MCF 10A (cell line): ENCODE measurements at regions of chr4 and their contacts with region 1.

Region 1: GRCh38 chr4:83043801-83044407 is 8.9 kb downstream of the COPS4 start:
- DNase-seq: peak; percentile 56
- H3K4me3 Mint-ChIP-seq: no peak overlapping the region
- H3K27ac Mint-ChIP-seq: peak overlapping the region; percentile 31
- H3K4me1 Mint-ChIP-seq: peaks cover 5% of the 10 kb centered on the region
- H3K27me3 Mint-ChIP-seq: no peaks in the 10 kb centered on the region
- CTCF ChIP-seq: no peak

Region 2: DNA sequence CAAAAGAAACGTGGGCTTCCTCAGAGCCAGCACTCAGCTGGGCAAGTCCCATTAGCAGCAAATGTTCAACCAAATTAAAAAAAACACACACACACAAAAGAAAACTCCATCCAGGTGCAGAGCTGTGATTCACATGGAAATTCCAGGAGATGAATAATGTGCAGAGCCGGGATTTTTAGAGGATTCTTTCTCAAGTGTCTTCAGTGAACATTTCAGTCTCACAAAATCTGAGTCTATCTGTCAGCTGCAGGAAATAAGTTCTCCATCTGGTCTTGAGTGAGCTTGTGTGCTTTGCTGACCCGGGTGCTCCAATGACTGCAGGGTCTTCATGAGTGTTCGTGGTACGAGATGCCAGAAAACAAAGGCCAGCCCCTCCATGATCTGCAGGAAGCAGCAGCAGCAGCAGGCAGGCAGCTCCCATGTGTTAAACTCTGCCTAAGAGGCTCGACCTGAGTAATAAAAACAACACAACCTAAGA is 1616.5 kb before region 1 on chr4:
- CTCF ChIA-PET with region 1: no interaction called
- POLR2A ChIA-PET with region 1: no interaction called
- intact Hi-C with region 1: no loop called
- DNase-seq: peak; percentile 34
- H3K4me3 Mint-ChIP-seq: peak overlapping the region; percentile 35
- H3K27ac Mint-ChIP-seq: peak overlapping the region; percentile 94
- H3K4me1 Mint-ChIP-seq: peaks cover 25% of the 10 kb centered on the region
- H3K27me3 Mint-ChIP-seq: no peaks in the 10 kb centered on the region
- CTCF ChIP-seq: no peak

Region 3: GRCh38 chr4:83259586-83259985 is 215.7 kb after region 1 on chr4:
- CTCF ChIA-PET with region 1: interaction called, 10 read pairs
- POLR2A ChIA-PET with region 1: interaction called, 4 read pairs
- intact Hi-C with region 1: no loop called
- DNase-seq: no peak
- H3K4me3 Mint-ChIP-seq: no peak overlapping the region
- H3K27ac Mint-ChIP-seq: no peak overlapping the region
- H3K4me1 Mint-ChIP-seq: peaks cover 13% of the 10 kb centered on the region
- H3K27me3 Mint-ChIP-seq: no peaks in the 10 kb centered on the region
- CTCF ChIP-seq: no peak